ENCODE measurements at regions of chrX and their contacts with region 1.

Region 1: DNA sequence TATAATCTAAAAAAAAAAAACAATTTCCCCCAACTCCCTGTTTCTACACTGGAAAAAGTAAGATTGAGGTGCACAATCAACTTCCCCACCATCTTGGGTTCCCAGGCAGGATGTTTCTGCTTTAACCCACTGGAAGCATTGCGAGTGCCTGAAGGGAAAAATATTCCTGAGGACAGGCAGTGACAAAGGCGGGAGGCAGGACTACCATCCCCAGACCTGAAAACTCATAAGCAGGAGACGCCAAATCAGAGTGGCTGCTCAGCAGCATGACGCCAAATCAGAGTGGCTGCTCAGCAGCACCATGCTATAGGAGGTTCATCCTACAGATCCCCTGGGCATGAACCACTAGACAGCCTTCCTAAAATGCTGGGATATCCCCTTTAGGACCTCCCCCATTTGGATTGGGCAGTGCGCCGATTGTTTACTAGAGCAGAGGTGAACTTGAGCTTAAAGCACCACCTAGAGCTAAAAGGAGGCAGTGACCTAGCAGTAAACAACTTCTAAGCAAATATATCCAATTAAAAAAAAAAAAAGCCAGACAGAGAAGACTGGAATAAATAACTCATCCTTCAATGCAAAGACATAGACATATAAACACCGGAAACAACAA is 35.0 kb upstream of the GK start:
- DNase-seq: no peak
- ATAC-seq: peak; percentile 50; the same call in 2 of the 3 replicates
- H3K4me3 ChIP-seq: no peak overlapping the region
- H3K27ac ChIP-seq: no peak overlapping the region
- H3K4me1 ChIP-seq: peaks cover 9% of the 10 kb centered on the region
- H3K27me3 ChIP-seq: no peaks in the 10 kb centered on the region
- CTCF ChIP-seq: peak; percentile 47
- EP300 ChIP-seq: no peak
- POLR2A ChIP-seq: no peak
- RAD21 ChIP-seq: no peak

Region 2: DNA sequence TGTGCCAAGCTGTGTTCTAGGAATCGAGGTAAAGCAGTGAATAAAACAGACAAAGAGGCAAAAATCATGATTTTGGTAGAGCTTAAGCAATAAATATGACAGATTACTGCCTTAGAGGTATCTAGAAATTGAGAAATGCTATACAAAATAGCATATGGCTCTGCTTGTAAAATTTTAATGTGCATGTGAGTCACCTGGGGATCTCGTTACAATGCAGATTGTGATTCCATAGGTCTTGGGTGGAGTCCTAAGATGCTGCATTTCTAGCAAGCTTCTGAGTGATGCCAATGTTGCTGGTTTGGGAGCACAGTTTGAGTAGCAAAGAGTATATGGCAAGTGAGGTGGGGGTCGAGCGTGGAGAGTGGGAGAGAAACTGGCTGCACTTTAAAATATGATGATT is 1100.2 kb before region 1 on chrX:
- CTCF ChIA-PET with region 1: no interaction called
- POLR2A ChIA-PET with region 1: no interaction called
- in situ Hi-C with region 1: no loop called
- intact Hi-C with region 1: no loop called
- DNase-seq: no peak
- ATAC-seq: no peak
- H3K4me3 ChIP-seq: no peak overlapping the region
- H3K27ac ChIP-seq: no peak overlapping the region
- H3K4me1 ChIP-seq: no peaks in the 10 kb centered on the region
- H3K27me3 ChIP-seq: no peaks in the 10 kb centered on the region
- CTCF ChIP-seq: no peak
- EP300 ChIP-seq: no peak
- POLR2A ChIP-seq: no peak
- RAD21 ChIP-seq: no peak

Region 3: DNA sequence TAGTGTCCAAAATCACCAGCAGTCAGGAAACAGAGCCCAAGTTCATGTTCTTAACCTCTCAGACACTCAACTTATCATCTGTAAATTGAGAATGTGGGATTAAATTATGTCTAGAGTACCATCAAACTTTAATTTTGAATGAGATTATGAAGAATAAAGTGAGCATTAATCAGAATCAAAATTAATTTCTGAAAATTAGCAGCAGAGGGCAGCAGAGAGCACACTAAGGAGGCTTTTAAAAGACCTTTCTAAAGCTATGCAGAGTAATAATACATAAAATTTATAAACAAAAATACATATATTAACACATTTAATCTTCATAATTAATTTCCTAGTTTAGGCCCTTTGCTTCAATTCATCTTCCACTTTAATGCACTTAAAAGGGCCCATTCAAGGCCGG is 47.8 kb before region 1 on chrX:
- CTCF ChIA-PET with region 1: interaction called, 9 read pairs
- POLR2A ChIA-PET with region 1: no interaction called
- in situ Hi-C with region 1: no loop called
- intact Hi-C with region 1: loop called (anchors 2 kb)
- DNase-seq: peak; percentile 2
- ATAC-seq: no peak
- H3K4me3 ChIP-seq: no peak overlapping the region
- H3K27ac ChIP-seq: no peak overlapping the region
- H3K4me1 ChIP-seq: peaks cover 26% of the 10 kb centered on the region
- H3K27me3 ChIP-seq: no peaks in the 10 kb centered on the region
- CTCF ChIP-seq: peak; percentile 36; the same call in 1 of the 2 replicates
- EP300 ChIP-seq: no peak
- POLR2A ChIP-seq: no peak
- RAD21 ChIP-seq: no peak

Region 4: DNA sequence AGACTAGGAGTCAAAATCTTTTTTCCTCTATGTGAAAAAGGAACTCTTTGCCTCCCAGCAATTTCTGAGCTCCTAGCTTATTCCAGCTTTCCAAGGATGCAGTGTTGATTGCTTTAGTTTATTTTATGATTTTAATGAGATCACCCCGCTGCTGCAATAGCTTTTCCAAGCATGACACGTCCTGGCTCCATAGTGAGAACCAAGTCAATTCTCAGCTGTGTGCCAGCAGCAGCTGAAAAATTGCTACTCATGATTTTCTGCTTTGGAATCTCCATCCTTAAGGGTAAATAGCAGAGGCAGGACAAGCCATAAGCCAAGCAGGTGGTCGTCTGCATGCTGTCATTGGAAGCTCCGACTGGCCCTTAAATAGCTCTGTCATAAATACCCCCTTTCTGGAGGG is 389.1 kb after region 1 on chrX:
- CTCF ChIA-PET with region 1: no interaction called
- POLR2A ChIA-PET with region 1: no interaction called
- in situ Hi-C with region 1: no loop called
- intact Hi-C with region 1: no loop called
- DNase-seq: no peak
- ATAC-seq: no peak
- H3K4me3 ChIP-seq: no peak overlapping the region
- H3K27ac ChIP-seq: no peak overlapping the region
- H3K4me1 ChIP-seq: peaks cover 7% of the 10 kb centered on the region
- H3K27me3 ChIP-seq: no peaks in the 10 kb centered on the region
- CTCF ChIP-seq: no peak
- EP300 ChIP-seq: no peak
- POLR2A ChIP-seq: no peak
- RAD21 ChIP-seq: no peak

Measured in HepG2 (cell line).